CD4-positive, alpha-beta T cell (primary cell): ENCODE measurements at regions of chr12 and their contacts with region 1.

Region 1: DNA sequence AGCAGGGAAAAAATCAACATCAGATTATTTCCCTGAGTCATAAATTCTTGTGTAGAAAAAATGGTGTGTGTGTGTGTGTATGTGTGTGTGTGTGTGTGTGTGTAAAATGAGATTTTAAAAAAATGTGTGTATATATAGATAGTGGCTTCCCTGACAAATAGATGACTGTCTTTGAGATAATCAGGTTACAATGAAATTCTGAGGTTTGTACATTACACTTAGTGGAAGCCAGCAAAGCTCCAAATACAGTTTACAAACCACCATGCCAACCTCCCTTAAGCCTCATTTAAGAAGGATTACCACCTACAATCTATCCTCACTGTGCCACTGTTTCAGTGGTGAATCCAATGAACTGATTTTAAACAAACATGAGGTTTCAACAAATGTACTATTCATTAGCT is 93.8 kb downstream of the MED13L start:
- DNase-seq: no peak
- ATAC-seq: no peak
- H3K4me3 ChIP-seq: no peak overlapping the region
- H3K4me3 Mint-ChIP-seq: no peak overlapping the region
- H3K27ac ChIP-seq: no peak overlapping the region
- H3K27ac Mint-ChIP-seq: no peak overlapping the region
- H3K4me1 ChIP-seq: peaks cover 14% of the 10 kb centered on the region
- H3K4me1 Mint-ChIP-seq: peaks cover 93% of the 10 kb centered on the region
- H3K27me3 ChIP-seq: no peaks in the 10 kb centered on the region
- H3K27me3 Mint-ChIP-seq: no peaks in the 10 kb centered on the region
- CTCF ChIP-seq: no peak

Region 2: DNA sequence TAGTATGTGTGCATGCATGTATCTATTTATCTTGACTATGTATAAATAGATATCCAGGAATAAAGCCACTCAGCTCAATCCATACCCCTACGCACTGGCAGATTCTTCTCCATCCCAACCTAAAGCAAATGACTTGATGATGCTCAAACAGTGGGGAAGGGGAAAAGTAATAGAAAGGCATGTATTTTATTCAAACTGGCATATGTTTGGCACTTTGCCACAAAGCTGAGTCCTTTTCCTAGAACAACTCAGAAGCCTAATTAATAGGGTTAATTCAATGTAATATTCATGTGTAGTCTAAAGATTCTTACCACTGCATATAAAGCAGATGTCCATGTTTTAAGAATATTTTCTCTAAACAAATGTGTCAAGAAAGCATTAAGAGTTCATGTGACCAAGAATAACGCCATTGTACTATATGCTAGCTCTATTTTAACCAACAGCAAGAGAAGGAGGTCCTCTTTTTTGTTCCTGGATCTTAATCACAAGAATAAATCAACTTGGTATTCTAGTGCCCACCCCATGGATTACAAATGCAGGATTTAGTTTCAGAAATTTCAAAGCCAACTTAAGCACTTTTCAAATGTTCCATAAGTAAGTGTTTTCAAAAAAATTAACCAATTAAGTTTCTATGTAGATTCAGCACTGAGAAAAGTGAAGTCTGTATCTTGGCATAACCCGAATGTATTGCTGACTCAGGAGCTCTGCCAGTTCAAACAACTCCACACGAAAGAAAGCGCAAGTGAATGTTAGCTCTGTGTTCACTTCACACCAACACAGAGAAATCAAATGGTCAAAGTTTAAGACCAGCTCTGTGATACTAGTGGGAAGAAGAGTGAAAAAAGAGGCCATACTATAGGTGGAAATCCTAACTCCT is 139.8 kb before region 1 on chr12:
- CTCF ChIA-PET with region 1: no interaction called
- POLR2A ChIA-PET with region 1: no interaction called
- intact Hi-C with region 1: no loop called
- DNase-seq: no peak
- ATAC-seq: no peak
- H3K4me3 ChIP-seq: no peak overlapping the region
- H3K4me3 Mint-ChIP-seq: no peak overlapping the region
- H3K27ac ChIP-seq: no peak overlapping the region
- H3K27ac Mint-ChIP-seq: no peak overlapping the region
- H3K4me1 ChIP-seq: no peaks in the 10 kb centered on the region
- H3K4me1 Mint-ChIP-seq: peaks cover 65% of the 10 kb centered on the region
- H3K27me3 ChIP-seq: no peaks in the 10 kb centered on the region
- H3K27me3 Mint-ChIP-seq: no peaks in the 10 kb centered on the region
- CTCF ChIP-seq: no peak

Region 3: GRCh38 chr12:116066381-116067230 is 117.1 kb before region 1 on chr12:
- CTCF ChIA-PET with region 1: no interaction called
- POLR2A ChIA-PET with region 1: no interaction called
- intact Hi-C with region 1: no loop called
- DNase-seq: peak; percentile 32 to 80 (median 44)
- ATAC-seq: peak; percentile 89
- H3K4me3 ChIP-seq: no peak overlapping the region
- H3K4me3 Mint-ChIP-seq: no peak overlapping the region
- H3K27ac ChIP-seq: no peak overlapping the region
- H3K27ac Mint-ChIP-seq: no peak overlapping the region
- H3K4me1 ChIP-seq: no peaks in the 10 kb centered on the region
- H3K4me1 Mint-ChIP-seq: peaks cover 77% of the 10 kb centered on the region
- H3K27me3 ChIP-seq: no peaks in the 10 kb centered on the region
- H3K27me3 Mint-ChIP-seq: no peaks in the 10 kb centered on the region
- CTCF ChIP-seq: peak; percentile 90

Region 4: DNA sequence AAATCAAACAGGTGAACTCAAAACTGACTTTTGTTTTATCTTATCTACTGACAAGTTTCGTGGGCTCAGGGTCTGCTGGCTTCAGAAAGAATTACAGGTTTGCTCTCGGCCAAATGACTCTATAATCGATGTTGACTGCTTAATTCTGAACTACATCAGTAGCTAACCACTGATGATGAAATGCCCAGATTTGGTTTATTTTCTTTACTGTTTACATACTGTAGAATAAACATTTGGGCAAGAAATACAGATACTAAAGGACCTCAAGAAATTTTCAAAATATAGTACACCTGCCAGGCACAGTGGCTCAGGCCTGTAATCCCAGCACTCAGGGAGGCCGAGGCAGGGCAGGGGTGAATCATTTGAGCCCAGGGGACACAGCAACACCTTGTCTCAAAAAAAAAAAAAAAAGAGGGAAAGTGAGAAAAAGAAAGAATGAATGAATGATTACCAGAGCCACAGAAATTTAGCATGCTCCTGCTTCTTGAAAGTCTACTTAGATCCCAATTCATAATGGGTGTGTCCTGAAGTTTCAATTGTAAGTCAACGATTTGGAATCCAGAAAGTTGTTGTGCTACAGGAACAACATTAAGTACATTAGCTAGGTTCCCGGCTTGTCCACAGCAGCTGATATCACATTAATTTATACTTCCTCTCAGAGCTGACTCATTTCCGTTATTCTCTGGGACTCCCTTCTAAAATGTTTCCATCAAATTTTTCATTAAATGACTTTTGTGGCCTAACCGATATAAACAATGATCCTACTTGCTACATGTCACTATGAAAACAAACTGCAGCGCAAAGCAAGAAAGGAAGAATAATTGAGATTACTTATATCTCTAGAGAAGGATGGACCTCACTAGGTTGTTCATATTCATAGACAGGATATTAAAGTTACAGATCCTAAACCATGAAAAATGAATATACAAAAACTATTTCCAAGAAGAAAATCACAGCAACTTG is 40.5 kb before region 1 on chr12:
- CTCF ChIA-PET with region 1: interaction called, 3 read pairs
- POLR2A ChIA-PET with region 1: no interaction called
- intact Hi-C with region 1: loop called in 1 of 2 experiments (anchors 5 kb)
- DNase-seq: peak in 3 of 14 experiments; percentile 25 to 32 (median 28)
- ATAC-seq: peak; percentile 26
- H3K4me3 ChIP-seq: no peak overlapping the region
- H3K4me3 Mint-ChIP-seq: peak overlapping the region; percentile 13
- H3K27ac ChIP-seq: no peak overlapping the region
- H3K27ac Mint-ChIP-seq: peak overlapping the region; percentile 13
- H3K4me1 ChIP-seq: peaks cover 15% of the 10 kb centered on the region
- H3K4me1 Mint-ChIP-seq: peaks cover 50% of the 10 kb centered on the region
- H3K27me3 ChIP-seq: no peaks in the 10 kb centered on the region
- H3K27me3 Mint-ChIP-seq: no peaks in the 10 kb centered on the region
- CTCF ChIP-seq: no peak

Region 5: GRCh38 chr12:116172224-116172849 is 11.4 kb before region 1 on chr12:
- CTCF ChIA-PET with region 1: interaction called, 4 read pairs
- POLR2A ChIA-PET with region 1: interaction called, 3 read pairs
- intact Hi-C with region 1: loop called in 1 of 2 experiments (anchors 2 kb)
- DNase-seq: peak in 7 of 14 experiments; percentile 4 to 47 (median 26)
- ATAC-seq: peak; percentile 76
- H3K4me3 ChIP-seq: peak overlapping the region; percentile 19
- H3K4me3 Mint-ChIP-seq: peak overlapping the region; percentile 71
- H3K27ac ChIP-seq: no peak overlapping the region
- H3K27ac Mint-ChIP-seq: peak overlapping the region; percentile 48
- H3K4me1 ChIP-seq: peaks cover 11% of the 10 kb centered on the region
- H3K4me1 Mint-ChIP-seq: peaks cover 73% of the 10 kb centered on the region
- H3K27me3 ChIP-seq: no peaks in the 10 kb centered on the region
- H3K27me3 Mint-ChIP-seq: no peaks in the 10 kb centered on the region
- CTCF ChIP-seq: no peak